ENCODE measurements at regions of chr21 and their contacts with region 1.

Region 1: GRCh38 chr21:43810505-43811261 is 21.3 kb downstream of the RRP1 start:
- DNase-seq: peak in 9 of 10 donors; percentile 71 to 87 (median 83)
- H3K4me3 ChIP-seq: peak overlapping the region in 22 of 59 donors; percentile 1 to 43 (median 20)
- H3K27ac ChIP-seq: peak overlapping the region in 3 of 59 donors; percentile 3 to 71 (median 53)
- H3K27me3 ChIP-seq: no peaks in the 10 kb centered on the region
- CTCF ChIP-seq: peak; percentile 73 to 96 (median 93)

Region 2: DNA sequence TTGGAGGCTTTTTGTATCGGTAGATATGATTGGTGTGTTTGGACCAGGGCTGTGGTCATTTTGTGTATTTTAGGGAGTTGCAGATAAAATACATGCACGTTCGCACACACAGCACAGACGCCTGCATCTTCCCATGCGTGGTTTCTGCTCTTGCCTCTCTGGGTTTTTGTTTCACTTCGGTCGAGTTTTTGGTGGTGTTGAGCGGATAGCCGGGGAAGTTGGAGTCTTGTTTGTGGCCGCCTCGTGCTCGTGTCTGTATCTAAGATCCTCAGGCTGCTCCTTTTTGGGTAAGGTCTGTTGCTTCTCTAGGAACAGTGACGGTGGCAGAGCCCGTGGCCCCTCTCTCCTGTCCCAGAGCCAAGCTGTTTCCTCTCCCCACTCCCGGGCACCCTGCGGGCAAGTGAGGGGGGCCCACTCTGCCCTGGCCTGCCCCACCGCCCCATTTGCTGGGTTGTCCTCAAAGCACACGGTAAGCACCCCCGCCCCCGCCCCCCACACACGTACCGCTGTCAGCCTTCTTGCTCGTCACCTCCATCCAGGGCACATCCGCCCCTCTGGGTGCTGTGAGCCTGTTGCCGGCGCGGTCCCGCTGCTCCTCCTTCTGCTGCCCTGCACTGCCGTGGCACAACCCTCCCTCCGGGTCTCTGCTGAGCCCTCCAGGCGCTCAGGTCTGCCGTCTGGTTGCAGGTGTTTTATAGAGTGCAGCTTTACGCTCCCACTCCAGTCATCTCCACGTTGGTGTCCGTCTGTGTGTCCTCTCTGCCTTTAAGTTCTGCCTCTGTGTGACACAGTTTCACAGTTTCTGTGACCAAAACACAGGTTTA is 106.2 kb after region 1 on chr21:
- intact Hi-C with region 1: no loop called
- DNase-seq: peak in 2 of 10 donors; percentile 16 to 41
- H3K4me3 ChIP-seq: peak overlapping the region in 35 of 59 donors; percentile 5 to 58 (median 32)
- H3K27ac ChIP-seq: no peak overlapping the region
- H3K27me3 ChIP-seq: no peaks in the 10 kb centered on the region
- CTCF ChIP-seq: no peak

Region 3: GRCh38 chr21:43949499-43950208 is 139.0 kb after region 1 on chr21:
- intact Hi-C with region 1: loop called in 1 of 2 experiments (anchors 5 kb)
- DNase-seq: no peak
- H3K4me3 ChIP-seq: no peak overlapping the region
- H3K27ac ChIP-seq: no peak overlapping the region
- H3K27me3 ChIP-seq: no peaks in the 10 kb centered on the region
- CTCF ChIP-seq: no peak

Region 4: GRCh38 chr21:43975495-43975993 is 164.9 kb after region 1 on chr21:
- intact Hi-C with region 1: loop called (anchors 1 to 2 kb)
- DNase-seq: peak; percentile 82 to 90 (median 85)
- H3K4me3 ChIP-seq: peak overlapping the region in 11 of 59 donors; percentile 2 to 26 (median 21)
- H3K27ac ChIP-seq: peak overlapping the region in 20 of 59 donors; percentile 15 to 70 (median 44)
- H3K27me3 ChIP-seq: no peaks in the 10 kb centered on the region
- CTCF ChIP-seq: peak; percentile 60 to 98 (median 92)

Region 5: DNA sequence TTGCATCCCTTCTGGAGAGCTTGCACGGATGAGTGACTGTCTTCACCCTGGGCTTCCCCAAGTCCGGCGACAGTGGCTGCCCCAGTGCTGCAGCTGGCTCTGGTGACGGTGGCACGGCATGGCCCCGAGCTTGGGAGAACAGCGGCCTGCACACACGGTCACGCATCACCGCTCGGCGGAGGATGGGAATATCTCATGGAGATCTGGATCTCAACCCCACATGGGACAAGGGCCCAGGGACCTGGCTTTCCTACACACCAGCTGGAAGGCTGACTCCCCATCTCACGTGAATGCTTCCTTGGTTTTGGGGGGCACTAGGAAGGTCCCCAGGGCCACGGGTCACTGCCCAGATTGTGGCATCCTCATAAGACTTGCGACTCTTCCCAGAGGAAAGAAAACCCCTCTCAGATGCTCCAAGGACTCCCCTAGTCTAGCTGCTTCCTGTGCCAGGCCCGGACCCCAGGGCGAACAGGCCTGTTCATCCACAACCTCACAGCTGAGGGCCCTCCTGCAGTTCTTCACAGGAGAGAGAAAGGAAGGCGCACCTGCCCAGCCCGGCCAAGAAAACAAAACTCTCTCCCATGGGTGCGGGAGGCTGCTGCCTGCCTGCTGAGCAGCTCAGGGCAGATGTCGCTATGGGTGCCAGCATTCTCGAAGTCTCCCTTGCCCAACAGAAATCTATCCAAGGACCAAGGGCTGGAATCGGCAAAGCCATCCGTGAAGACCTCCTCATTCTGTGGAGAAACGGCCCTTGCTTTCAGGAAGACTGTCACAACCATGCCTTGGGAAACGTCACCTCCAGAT is 518.6 kb after region 1 on chr21:
- intact Hi-C with region 1: loop called in 1 of 2 experiments (anchors 10 kb)
- DNase-seq: peak in 3 of 10 donors; percentile 43 to 59 (median 52)
- H3K4me3 ChIP-seq: no peak overlapping the region
- H3K27ac ChIP-seq: peak overlapping the region in 46 of 59 donors; percentile 8 to 83 (median 62)
- H3K27me3 ChIP-seq: no peaks in the 10 kb centered on the region
- CTCF ChIP-seq: peak in 1 of 56 donors; percentile 10

Measured in dorsolateral prefrontal cortex (tissue), 120 donors.